IMR-90 (cell line): ENCODE measurements at regions of chr1 and their contacts with region 1.

Region 1: DNA sequence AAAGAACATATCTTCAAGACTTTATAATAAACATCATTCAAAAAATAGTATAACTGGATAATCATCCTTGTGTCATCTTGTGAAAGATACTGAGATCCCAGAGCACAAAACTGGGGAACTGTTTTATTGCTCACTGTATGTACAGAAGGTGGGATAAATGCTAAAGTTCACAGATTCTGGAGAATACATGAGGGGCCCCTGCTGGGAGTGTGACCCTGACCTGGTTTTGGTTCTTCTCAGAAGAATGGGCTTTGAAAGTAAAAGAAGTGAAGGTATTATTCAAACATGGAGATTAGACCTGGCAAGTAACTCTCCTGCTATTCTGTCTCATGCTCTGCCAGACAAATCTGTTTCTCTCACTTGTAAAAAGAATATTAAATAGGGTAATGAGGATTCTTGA is 14.5 kb downstream of the WDR26 start:
- DNase-seq: no peak
- ATAC-seq: no peak
- H3K4me3 ChIP-seq: no peak overlapping the region
- H3K27ac ChIP-seq: no peak overlapping the region
- H3K4me1 ChIP-seq: no peaks in the 10 kb centered on the region
- H3K27me3 ChIP-seq: no peaks in the 10 kb centered on the region
- CTCF ChIP-seq: no peak
- POLR2A ChIP-seq: no peak
- RAD21 ChIP-seq: no peak

Region 2: GRCh38 chr1:224402472-224403035 is 17.6 kb before region 1 on chr1:
- CTCF ChIA-PET with region 1: interaction called, 3 read pairs
- POLR2A ChIA-PET with region 1: no interaction called
- dilution Hi-C with region 1: no loop called
- in situ Hi-C with region 1: no loop called
- intact Hi-C with region 1: loop called (anchors 2 kb)
- DNase-seq: no peak
- ATAC-seq: no peak
- H3K4me3 ChIP-seq: no peak overlapping the region
- H3K27ac ChIP-seq: no peak overlapping the region
- H3K4me1 ChIP-seq: peaks cover 5% of the 10 kb centered on the region; the same call in 1 of the 2 replicates
- H3K27me3 ChIP-seq: no peaks in the 10 kb centered on the region
- CTCF ChIP-seq: no peak
- POLR2A ChIP-seq: no peak
- RAD21 ChIP-seq: no peak

Region 3: DNA sequence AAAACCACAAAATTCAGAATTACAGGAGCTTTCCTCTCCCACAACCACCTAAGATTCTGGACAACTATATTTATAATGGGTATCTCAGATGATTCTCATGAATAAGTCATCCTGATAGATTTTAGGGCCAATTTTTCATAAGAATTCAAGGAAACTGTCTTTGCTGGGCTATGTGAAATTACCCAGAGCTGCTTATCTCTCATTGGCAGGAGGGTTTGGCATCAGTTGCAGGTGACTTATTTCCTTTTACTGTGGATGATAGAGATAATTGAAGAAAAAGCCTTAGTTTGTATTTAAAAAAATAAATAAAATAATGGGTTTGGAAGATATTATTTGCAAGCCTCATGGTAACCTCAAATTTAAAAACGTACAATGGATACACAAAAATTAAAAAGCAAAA is 52.7 kb after region 1 on chr1:
- CTCF ChIA-PET with region 1: no interaction called
- POLR2A ChIA-PET with region 1: no interaction called
- dilution Hi-C with region 1: no loop called
- in situ Hi-C with region 1: no loop called
- intact Hi-C with region 1: no loop called
- DNase-seq: no peak
- ATAC-seq: no peak
- H3K4me3 ChIP-seq: no peak overlapping the region
- H3K27ac ChIP-seq: no peak overlapping the region
- H3K4me1 ChIP-seq: no peaks in the 10 kb centered on the region
- H3K27me3 ChIP-seq: no peaks in the 10 kb centered on the region
- CTCF ChIP-seq: no peak
- POLR2A ChIP-seq: no peak
- RAD21 ChIP-seq: no peak

Region 4: GRCh38 chr1:224816062-224816461 is 396.0 kb after region 1 on chr1:
- CTCF ChIA-PET with region 1: no interaction called
- POLR2A ChIA-PET with region 1: no interaction called
- dilution Hi-C with region 1: no loop called
- in situ Hi-C with region 1: no loop called
- intact Hi-C with region 1: no loop called
- DNase-seq: no peak
- ATAC-seq: no peak
- H3K4me3 ChIP-seq: no peak overlapping the region
- H3K27ac ChIP-seq: no peak overlapping the region
- H3K4me1 ChIP-seq: no peaks in the 10 kb centered on the region
- H3K27me3 ChIP-seq: peaks cover 2% of the 10 kb centered on the region; the same call in 1 of the 2 replicates
- CTCF ChIP-seq: no peak
- POLR2A ChIP-seq: no peak
- RAD21 ChIP-seq: no peak